ENCODE measurements at regions of chr4 and their contacts with region 1.

Region 1: DNA sequence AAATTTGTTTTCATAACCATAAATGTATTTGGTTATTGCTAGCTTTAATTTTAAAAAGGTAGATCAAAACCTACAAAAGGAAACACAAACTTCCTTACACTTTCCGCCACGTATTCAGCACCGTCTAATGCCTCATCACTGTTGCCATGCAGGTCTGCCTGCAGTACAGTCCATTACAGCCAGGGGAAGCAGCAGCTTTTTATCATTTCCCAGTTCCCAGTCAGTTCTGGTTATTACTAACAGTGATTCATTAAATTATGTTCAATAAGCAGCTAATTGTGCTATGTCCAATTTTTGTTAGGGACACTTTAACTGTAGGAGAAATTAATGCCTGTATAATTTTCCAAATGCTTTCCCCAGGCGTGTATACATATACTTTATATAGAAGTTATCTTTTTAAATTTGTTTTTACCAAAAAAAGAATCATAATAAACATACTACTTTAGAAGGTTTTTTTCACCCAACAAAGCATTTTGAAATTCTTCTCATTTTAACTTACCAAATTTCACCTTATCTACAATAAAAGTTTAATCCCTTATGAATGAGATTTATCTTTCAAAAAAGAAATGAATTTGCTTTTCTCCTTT is 93.3 kb downstream of the ANXA3 start:
- DNase-seq: peak; percentile 79
- H3K4me3 Mint-ChIP-seq: peak overlapping the region; percentile 64
- H3K27ac Mint-ChIP-seq: peak overlapping the region; percentile 89
- H3K4me1 Mint-ChIP-seq: peaks cover 36% of the 10 kb centered on the region
- H3K27me3 Mint-ChIP-seq: no peaks in the 10 kb centered on the region
- CTCF ChIP-seq: peak; percentile 83

Region 2: GRCh38 chr4:78629991-78630541 is 14.8 kb before region 1 on chr4:
- CTCF ChIA-PET with region 1: interaction called, 42 read pairs
- POLR2A ChIA-PET with region 1: interaction called, 10 read pairs
- intact Hi-C with region 1: no loop called
- DNase-seq: no peak
- H3K4me3 Mint-ChIP-seq: no peak overlapping the region
- H3K27ac Mint-ChIP-seq: no peak overlapping the region
- H3K4me1 Mint-ChIP-seq: peaks cover 21% of the 10 kb centered on the region
- H3K27me3 Mint-ChIP-seq: no peaks in the 10 kb centered on the region
- CTCF ChIP-seq: no peak

Region 3: DNA sequence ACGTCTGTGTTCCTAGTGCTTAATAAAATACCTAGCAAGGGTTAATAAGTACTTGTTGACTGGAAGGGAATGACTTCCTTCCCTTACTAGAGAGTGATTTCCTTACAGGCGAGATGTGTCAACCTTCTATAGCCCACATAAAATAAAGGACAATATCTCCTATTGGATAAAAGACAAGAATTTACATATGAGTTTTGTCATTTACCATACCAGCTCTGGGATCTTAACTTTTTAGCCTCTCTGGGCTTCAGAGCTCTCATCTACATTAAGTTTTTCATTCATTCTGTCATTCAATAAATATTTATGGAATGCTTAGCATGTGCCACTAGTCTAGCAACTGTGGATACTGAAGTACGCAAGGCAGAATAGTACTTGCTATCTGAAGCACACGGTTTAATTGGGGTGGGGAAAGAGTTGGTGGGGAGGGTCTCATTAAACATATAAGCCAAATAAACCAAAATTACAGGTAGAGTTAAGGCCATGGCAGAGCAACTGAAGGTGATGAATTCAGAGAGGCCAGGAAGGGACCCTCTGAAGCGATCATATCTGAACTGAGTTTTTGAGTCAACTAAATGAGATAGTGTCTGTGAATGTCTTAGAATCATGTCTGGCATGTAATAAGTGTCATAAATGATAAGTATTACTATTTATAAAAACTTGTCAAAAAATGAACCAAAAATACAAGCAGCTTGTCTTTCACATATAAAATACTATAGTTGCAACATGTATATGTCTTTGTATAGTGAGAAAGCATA is 39.7 kb after region 1 on chr4:
- CTCF ChIA-PET with region 1: interaction called, 3 read pairs
- POLR2A ChIA-PET with region 1: interaction called, 5 read pairs
- intact Hi-C with region 1: loop called (anchors 5 kb)
- DNase-seq: no peak
- H3K4me3 Mint-ChIP-seq: no peak overlapping the region
- H3K27ac Mint-ChIP-seq: no peak overlapping the region
- H3K4me1 Mint-ChIP-seq: peaks cover 16% of the 10 kb centered on the region
- H3K27me3 Mint-ChIP-seq: no peaks in the 10 kb centered on the region
- CTCF ChIP-seq: no peak

Region 4: GRCh38 chr4:78775303-78776030 is 130.6 kb after region 1 on chr4:
- CTCF ChIA-PET with region 1: interaction called, 6 read pairs
- POLR2A ChIA-PET with region 1: interaction called, 87 read pairs
- intact Hi-C with region 1: loop called (anchors 1 kb)
- DNase-seq: peak; percentile 80
- H3K4me3 Mint-ChIP-seq: peak overlapping the region; percentile 94
- H3K27ac Mint-ChIP-seq: peak overlapping the region; percentile 96
- H3K4me1 Mint-ChIP-seq: no peaks in the 10 kb centered on the region
- H3K27me3 Mint-ChIP-seq: no peaks in the 10 kb centered on the region
- CTCF ChIP-seq: no peak

Region 5: GRCh38 chr4:78845472-78845871 is 200.6 kb after region 1 on chr4:
- CTCF ChIA-PET with region 1: interaction called, 13 read pairs
- POLR2A ChIA-PET with region 1: interaction called, 6 read pairs
- intact Hi-C with region 1: no loop called
- DNase-seq: no peak
- H3K4me3 Mint-ChIP-seq: no peak overlapping the region
- H3K27ac Mint-ChIP-seq: no peak overlapping the region
- H3K4me1 Mint-ChIP-seq: no peaks in the 10 kb centered on the region
- H3K27me3 Mint-ChIP-seq: no peaks in the 10 kb centered on the region
- CTCF ChIP-seq: no peak